CD14-positive monocyte (primary cell): ENCODE measurements at regions of chr14 and their contacts with region 1.

Region 1: DNA sequence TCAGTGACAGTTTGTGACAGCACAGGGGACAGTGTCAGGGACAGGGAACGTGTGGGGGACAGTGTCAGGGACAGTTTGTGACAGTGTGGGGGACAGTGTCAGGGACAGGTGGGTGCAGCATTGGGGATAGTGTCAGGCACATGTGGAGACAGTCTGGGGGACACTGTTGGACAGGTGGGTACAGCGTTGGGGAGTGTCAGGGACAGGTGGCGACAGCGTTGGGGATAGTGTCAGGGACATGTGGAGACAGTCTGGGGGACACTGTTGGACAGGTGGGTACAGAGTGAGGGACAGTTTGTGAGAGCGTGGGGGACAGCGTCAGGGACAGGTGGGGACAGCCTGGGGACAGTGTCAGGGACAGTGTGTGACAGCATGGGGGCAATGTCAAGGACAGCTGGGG is 140.0 kb downstream of the TMEM121 start:
- DNase-seq: no peak
- H3K4me3 ChIP-seq: no peak overlapping the region
- H3K4me3 Mint-ChIP-seq: no peak overlapping the region
- H3K27ac ChIP-seq: no peak overlapping the region
- H3K27ac Mint-ChIP-seq: no peak overlapping the region
- H3K4me1 ChIP-seq: no peaks in the 10 kb centered on the region
- H3K4me1 Mint-ChIP-seq: no peaks in the 10 kb centered on the region
- H3K27me3 ChIP-seq: no peaks in the 10 kb centered on the region
- H3K27me3 Mint-ChIP-seq: peaks cover 0 to 10% (median 2%) of the 10 kb centered on the region in 3 donors
- CTCF ChIP-seq: no peak

Region 2: DNA sequence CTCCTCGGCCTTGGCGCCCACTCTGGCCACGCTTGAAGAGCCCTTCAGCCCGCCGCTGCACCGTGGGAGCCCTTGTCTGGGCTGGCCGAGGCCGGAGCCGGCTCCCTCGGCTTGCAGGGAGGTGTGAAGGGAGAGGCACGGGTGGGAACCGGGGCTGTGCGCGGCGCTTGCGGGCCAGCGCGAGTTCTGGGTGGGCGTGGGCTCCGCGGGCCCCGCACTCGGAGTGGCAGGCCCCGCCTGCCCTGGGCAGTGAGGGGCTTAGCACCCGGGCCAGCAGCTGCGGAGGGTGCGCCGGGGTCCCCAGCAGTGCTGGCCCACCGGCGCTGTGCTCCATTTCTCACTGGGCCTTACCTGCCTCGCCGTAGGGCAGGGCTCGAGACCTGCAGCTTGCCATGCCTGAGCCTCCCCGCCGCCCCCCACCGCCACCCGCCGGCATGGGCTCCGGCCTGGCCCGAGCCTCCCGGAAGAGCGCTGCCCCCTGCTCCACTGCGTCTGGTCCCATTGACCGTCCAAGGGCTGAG is 118.7 kb before region 1 on chr14:
- intact Hi-C with region 1: no loop called
- DNase-seq: no peak
- H3K4me3 ChIP-seq: no peak overlapping the region
- H3K4me3 Mint-ChIP-seq: no peak overlapping the region
- H3K27ac ChIP-seq: no peak overlapping the region
- H3K27ac Mint-ChIP-seq: no peak overlapping the region
- H3K4me1 ChIP-seq: no peaks in the 10 kb centered on the region
- H3K4me1 Mint-ChIP-seq: no peaks in the 10 kb centered on the region
- H3K27me3 ChIP-seq: no peaks in the 10 kb centered on the region
- H3K27me3 Mint-ChIP-seq: peaks cover 2 to 7% (median 3%) of the 10 kb centered on the region in 3 donors
- CTCF ChIP-seq: no peak

Region 3: GRCh38 chr14:105739331-105740102 is 73.1 kb after region 1 on chr14:
- intact Hi-C with region 1: loop called in 1 of 2 experiments (anchors 5 kb)
- DNase-seq: no peak
- H3K4me3 ChIP-seq: no peak overlapping the region
- H3K4me3 Mint-ChIP-seq: no peak overlapping the region
- H3K27ac ChIP-seq: no peak overlapping the region
- H3K27ac Mint-ChIP-seq: no peak overlapping the region
- H3K4me1 ChIP-seq: no peaks in the 10 kb centered on the region
- H3K4me1 Mint-ChIP-seq: no peaks in the 10 kb centered on the region
- H3K27me3 ChIP-seq: no peaks in the 10 kb centered on the region
- H3K27me3 Mint-ChIP-seq: peaks cover 0 to 1% (median 0%) of the 10 kb centered on the region in 3 donors
- CTCF ChIP-seq: no peak

Region 4: GRCh38 chr14:105999361-106000028 is 333.1 kb after region 1 on chr14:
- intact Hi-C with region 1: loop called in 1 of 2 experiments (anchors 10 kb)
- DNase-seq: peak; percentile 37 to 59 (median 44)
- H3K4me3 ChIP-seq: no peak overlapping the region
- H3K4me3 Mint-ChIP-seq: no peak overlapping the region
- H3K27ac ChIP-seq: no peak overlapping the region
- H3K27ac Mint-ChIP-seq: peak overlapping the region in 1 of 7 donors; percentile 25
- H3K4me1 ChIP-seq: peaks cover 0 to 11% of the 10 kb centered on the region in 2 donors
- H3K4me1 Mint-ChIP-seq: peaks cover 10% of the 10 kb centered on the region
- H3K27me3 ChIP-seq: no peaks in the 10 kb centered on the region
- H3K27me3 Mint-ChIP-seq: peaks cover 0 to 1% (median 0%) of the 10 kb centered on the region in 3 donors
- CTCF ChIP-seq: peak; percentile 68

Region 5: DNA sequence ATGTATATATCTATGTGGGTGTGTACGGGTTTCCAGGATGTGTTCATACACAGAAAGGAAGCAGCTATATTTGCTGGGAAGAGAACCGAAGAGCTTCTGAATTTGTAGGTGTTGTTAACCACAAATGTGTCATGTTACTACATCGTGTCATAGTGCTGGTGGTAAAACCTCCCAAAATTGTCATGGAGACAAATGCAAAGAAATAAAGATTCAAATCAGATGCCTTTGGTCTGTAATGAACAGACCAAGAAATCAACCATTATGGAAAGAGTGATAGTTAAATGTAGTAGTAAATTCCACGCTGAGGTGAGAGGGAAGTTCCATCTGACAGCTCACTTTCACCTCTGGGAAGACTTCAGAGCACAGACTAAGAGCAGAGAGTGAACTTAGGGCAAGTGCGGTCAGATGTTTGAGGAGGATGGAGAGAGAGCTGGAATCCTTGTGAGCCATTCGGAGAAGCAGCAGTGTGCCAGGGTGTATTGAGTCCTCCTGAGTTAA is 347.5 kb after region 1 on chr14:
- intact Hi-C with region 1: loop called (anchors 5 to 10 kb)
- DNase-seq: no peak
- H3K4me3 ChIP-seq: no peak overlapping the region
- H3K4me3 Mint-ChIP-seq: no peak overlapping the region
- H3K27ac ChIP-seq: no peak overlapping the region
- H3K27ac Mint-ChIP-seq: no peak overlapping the region
- H3K4me1 ChIP-seq: no peaks in the 10 kb centered on the region
- H3K4me1 Mint-ChIP-seq: no peaks in the 10 kb centered on the region
- H3K27me3 ChIP-seq: no peaks in the 10 kb centered on the region
- H3K27me3 Mint-ChIP-seq: peaks cover 3 to 4% (median 3%) of the 10 kb centered on the region in 3 donors
- CTCF ChIP-seq: no peak